Dorsolateral prefrontal cortex (tissue), 120 donors: ENCODE measurements at regions of chr7 and their contacts with region 1.

Region 1: GRCh38 chr7:45923290-45923689 is 2.2 kb upstream of the IGFBP3 start:
- DNase-seq: peak; percentile 48 to 83 (median 76)
- H3K4me3 ChIP-seq: peak overlapping the region in 45 of 59 donors; percentile 6 to 68 (median 53)
- H3K27ac ChIP-seq: peak overlapping the region in 15 of 59 donors; percentile 19 to 70 (median 49)
- H3K27me3 ChIP-seq: peaks cover 0 to 71% (median 30%) of the 10 kb centered on the region in 45 donors
- CTCF ChIP-seq: peak; percentile 59 to 96 (median 89)

Region 2: DNA sequence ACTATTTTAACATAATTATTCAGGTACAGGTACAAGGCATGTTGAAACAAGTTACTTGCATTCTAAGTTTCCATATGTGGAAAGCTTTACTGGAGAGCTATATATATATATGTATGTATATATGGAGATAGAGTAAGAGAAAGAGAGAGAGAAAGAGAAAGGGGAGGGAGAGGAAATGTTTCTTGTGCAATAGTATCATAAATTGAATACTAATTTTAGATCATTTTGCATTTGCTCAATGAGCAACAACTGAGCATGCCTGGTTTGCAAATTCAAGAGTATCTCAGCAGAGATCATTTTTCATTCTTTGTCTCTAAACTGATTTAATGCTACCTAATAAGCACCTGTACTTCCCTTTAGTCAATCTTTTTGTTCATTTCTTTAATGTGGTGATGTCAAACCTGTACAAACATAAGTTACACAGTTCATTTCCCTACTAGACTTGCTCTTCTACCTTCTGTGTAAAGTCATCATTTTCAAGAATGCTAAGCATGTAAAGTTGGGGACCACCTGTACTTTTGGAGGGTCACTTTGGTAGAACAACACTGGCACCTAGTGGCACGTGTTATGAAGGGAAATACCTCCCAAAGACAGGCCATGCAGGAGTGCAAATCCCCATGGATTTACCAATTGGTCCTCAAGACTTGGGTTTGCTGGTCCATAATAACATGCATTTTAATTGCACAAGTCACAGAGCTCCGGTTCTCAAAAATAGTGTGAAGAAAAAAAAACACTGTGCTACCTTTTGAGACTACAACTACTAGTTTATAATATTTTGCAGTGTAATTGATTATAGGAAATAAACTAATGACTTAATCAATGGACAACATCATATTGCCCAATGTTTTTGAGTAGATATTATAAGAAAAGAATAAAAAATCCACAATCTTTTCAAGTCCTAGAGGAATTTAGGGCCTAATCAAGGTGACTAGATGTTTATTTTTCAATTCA is 429.0 kb after region 1 on chr7:
- intact Hi-C with region 1: loop called (anchors 2 kb)
- DNase-seq: peak in 3 of 10 donors; percentile 8 to 52 (median 43)
- H3K4me3 ChIP-seq: no peak overlapping the region
- H3K27ac ChIP-seq: no peak overlapping the region
- H3K27me3 ChIP-seq: peaks cover 0 to 44% (median 4%) of the 10 kb centered on the region in 45 donors
- CTCF ChIP-seq: peak in 55 of 56 donors; percentile 19 to 74 (median 53)

Region 3: DNA sequence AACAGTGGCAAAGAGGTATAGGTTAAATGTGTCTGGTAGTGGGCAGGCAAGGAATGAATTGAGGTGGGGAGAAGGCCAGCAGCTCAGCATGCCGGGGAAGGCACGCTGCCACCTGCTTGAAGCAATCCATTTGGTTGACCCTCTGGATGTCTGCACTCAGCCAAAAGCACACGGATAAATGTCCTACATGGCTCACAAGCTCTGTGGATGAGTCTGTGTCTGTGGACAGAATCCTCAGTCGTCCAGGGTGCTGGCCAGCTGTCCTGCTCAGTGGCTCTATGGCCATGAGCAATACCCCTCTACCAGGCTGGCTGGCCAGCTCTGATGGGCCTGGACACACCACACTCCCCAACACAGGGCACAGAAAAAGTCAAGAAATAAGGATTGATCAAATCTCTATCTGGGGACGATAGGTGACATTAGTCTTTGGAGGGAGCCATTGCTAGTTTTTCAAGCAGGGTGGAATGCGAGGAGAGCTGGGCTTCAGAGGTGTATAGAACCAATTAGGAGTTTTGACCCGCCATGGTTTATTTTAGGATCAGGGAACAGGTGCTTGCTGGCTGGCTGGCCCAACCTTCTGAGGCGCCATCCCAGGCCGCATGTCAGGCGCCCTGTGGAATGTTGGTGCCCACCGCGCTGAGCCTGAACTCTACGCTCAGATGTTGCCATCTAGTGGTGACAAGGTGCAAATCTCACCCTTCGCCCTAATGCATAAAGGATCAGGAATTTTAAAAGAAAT is 1165.2 kb after region 1 on chr7:
- intact Hi-C with region 1: loop called (anchors 2 to 5 kb)
- DNase-seq: peak in 9 of 10 donors; percentile 30 to 76 (median 55)
- H3K4me3 ChIP-seq: no peak overlapping the region
- H3K27ac ChIP-seq: no peak overlapping the region
- H3K27me3 ChIP-seq: peaks cover 0 to 35% (median 4%) of the 10 kb centered on the region in 45 donors
- CTCF ChIP-seq: peak; percentile 76 to 98 (median 90)

Region 4: DNA sequence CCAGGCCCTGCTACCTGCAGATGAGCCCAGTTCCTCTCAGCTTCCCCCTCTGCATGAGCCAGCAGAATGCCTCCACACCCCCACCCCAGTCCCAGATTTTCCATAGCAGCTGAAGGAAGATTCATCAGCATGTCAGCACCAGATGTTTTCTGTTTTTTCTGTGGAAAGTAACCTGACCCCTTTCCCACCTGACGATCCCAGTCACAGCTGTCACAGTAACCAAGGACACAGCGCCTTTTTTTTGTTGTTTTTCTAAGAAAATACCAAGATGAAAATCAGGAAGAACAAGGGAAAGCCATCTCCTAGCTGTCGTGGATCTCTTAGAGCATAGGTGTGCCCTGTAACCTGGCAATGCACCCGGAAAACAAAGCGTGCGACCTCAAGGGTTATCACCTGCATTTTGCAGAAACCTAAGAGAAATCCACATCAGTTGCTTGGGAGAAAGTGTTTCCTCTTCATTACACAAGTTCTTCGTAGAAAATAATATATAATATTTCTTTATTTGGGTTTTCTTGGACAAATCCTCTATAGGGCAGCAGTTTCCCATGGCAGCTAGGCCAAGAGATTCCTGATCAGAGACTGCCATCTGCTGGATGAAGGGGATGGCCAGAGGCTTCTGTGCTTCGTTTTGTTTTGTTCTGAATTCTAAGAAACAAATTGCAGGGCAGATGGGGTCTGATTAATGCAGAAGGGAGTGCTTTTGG is 1256.7 kb after region 1 on chr7:
- intact Hi-C with region 1: loop called in 1 of 2 experiments (anchors 2 kb)
- DNase-seq: peak in 7 of 10 donors; percentile 45 to 72 (median 56)
- H3K4me3 ChIP-seq: no peak overlapping the region
- H3K27ac ChIP-seq: no peak overlapping the region
- H3K27me3 ChIP-seq: peaks cover 0 to 6% (median 0%) of the 10 kb centered on the region in 45 donors
- CTCF ChIP-seq: peak; percentile 60 to 90 (median 76)

Region 5: GRCh38 chr7:47254081-47255006 is 1331.1 kb after region 1 on chr7:
- intact Hi-C with region 1: loop called (anchors 5 to 10 kb)
- DNase-seq: peak; percentile 40 to 79 (median 60)
- H3K4me3 ChIP-seq: peak overlapping the region; percentile 52 to 80 (median 66)
- H3K27ac ChIP-seq: peak overlapping the region in 54 of 59 donors; percentile 5 to 89 (median 70)
- H3K27me3 ChIP-seq: peaks cover 0 to 6% (median 0%) of the 10 kb centered on the region in 45 donors
- CTCF ChIP-seq: peak; percentile 45 to 98 (median 86)